ENCODE measurements at regions of chr21 and their contacts with region 1.

Region 1: DNA sequence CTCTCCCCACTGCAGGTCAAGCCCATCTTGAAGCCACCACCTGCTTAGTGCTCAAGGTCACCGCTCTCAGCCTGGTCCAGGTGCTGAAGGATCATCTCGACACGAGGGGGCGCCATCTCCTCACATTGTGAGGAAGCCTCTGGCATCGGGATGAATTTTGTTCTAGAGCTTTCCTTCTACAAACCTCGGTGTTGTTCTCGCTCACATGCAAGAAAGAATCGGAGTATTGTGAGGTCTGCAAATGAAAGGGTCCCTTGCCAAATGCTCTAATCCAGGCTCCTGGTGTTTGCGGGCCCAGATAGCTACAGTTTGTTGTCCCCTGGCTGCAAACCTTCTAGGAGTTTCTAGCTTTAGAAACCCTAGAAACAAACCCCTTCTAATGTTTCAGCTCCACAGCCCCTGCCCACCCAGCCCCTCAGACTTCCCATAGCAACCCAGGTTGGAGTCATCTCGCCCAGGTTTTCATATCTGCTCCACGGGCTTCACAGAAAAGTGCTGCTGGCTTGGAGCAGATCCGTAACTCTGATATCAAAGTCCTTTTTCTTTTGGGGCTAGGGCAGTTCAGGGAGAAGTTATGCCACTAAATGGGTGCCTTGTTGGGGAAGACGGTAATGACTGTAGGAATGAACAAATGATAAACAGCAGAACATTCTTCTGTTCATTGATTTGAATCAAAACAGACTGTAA is 8.6 kb upstream of the ATP5PO start:
- DNase-seq: no peak
- H3K4me3 ChIP-seq: no peak overlapping the region
- H3K27me3 ChIP-seq: no peaks in the 10 kb centered on the region
- CTCF ChIP-seq: peak; percentile 86

Region 2: DNA sequence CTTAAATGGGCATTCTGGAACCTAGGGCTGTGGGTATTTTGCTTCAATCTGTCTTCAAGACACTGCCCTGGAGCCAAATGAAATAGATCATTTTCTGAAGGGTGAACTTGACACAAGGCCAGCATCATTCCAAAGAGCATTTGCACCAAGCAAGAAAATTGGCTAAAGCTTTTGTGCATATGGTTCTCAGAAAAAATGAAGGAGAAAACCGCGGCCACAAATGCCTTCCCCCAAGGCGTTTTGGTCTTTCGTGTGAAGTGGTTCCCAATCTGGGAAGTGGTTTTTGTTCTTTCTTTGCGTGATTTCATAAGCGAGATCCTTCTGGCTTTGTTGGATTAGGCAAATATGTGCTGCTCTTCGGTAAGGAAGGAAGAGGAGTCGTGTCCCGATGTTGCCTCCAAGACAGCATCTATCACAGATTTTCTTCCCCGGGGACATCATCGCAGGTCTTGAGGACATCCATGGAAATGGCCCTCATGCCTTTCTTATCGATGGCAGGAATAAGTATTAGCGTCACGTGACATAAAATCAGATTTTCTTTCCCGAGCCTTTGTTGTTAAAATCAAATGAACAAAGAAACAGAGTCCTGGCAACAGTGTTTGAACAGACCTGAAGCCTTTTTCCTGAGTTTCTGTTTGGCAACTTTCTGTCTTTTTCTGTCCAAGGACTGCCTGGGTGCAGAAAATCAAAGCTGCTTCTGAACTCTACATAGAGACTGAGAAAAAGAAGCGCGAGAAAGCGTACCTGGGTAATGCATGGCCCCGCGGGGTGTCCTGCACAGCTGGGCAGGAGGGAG is 39.6 kb before region 1 on chr21:
- CTCF ChIA-PET with region 1: no interaction called
- POLR2A ChIA-PET with region 1: no interaction called
- DNase-seq: peak; percentile 70
- H3K4me3 ChIP-seq: no peak overlapping the region
- H3K27me3 ChIP-seq: peaks cover 4% of the 10 kb centered on the region; the same call in 1 of the 2 replicates
- CTCF ChIP-seq: no peak

Region 3: GRCh38 chr21:33940164-33940880 is 16.1 kb after region 1 on chr21:
- CTCF ChIA-PET with region 1: interaction called, 21 read pairs
- POLR2A ChIA-PET with region 1: no interaction called
- DNase-seq: no peak
- H3K4me3 ChIP-seq: no peak overlapping the region
- H3K27me3 ChIP-seq: no peaks in the 10 kb centered on the region
- CTCF ChIP-seq: no peak

Region 4: GRCh38 chr21:34073032-34073869 is 149.0 kb after region 1 on chr21 and contains the starts of genes MRPS6 and SLC5A3:
- CTCF ChIA-PET with region 1: interaction called, 24 read pairs
- POLR2A ChIA-PET with region 1: no interaction called
- DNase-seq: no peak
- H3K4me3 ChIP-seq: peak within 1 kb of the TSS; percentile 88
- H3K27me3 ChIP-seq: no peaks in the 10 kb centered on the region
- CTCF ChIP-seq: no peak
- polyA plus RNA-seq, gene MRPS6: 13.8 and 17.1 TPM in 2 replicates
- polyA plus RNA-seq, gene SLC5A3: 1.9 and 4.5 TPM in 2 replicates

Region 5: DNA sequence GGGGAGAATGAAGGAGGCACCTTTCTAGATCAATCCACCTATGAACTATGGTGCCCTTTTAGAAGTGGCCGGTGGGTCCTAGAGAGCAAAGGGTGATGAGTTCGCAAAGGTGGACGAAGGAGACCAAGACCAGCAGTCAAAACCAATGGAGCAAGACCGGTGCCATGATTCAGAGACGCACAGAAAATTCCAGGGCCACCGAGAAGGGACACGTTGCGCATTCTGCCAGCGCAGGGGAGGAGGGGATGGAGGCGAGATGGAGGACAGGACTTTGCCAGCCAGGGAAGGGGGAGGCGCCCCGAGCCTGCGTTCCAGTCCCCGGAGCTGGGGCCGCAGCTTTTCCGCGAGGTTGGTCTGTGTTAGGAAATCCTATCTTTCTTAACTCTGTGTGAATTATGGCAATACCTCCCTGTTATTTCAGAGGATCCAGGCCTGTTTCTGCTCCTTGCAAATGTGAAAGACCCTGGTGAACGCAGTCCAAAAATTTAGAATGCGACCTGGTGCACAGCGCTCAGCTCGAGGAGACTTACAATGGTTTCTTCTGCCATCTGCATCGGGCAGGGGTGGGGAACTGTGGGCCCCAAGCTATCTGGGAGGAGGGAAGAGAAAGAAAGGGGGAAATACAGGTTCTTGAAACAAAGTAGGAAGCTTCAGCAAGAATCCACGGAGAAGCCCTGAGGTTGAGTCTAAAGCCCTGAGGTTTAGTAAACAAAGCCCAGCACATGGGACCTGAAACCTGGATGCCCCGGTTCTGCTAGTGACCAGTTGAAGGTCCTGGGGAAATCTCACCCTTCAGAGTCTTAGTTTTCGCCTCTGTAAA is 278.5 kb after region 1 on chr21:
- CTCF ChIA-PET with region 1: interaction called, 33 read pairs
- POLR2A ChIA-PET with region 1: interaction called, 4 read pairs
- DNase-seq: no peak
- H3K4me3 ChIP-seq: no peak overlapping the region
- H3K27me3 ChIP-seq: no peaks in the 10 kb centered on the region
- CTCF ChIP-seq: no peak

Region 6: DNA sequence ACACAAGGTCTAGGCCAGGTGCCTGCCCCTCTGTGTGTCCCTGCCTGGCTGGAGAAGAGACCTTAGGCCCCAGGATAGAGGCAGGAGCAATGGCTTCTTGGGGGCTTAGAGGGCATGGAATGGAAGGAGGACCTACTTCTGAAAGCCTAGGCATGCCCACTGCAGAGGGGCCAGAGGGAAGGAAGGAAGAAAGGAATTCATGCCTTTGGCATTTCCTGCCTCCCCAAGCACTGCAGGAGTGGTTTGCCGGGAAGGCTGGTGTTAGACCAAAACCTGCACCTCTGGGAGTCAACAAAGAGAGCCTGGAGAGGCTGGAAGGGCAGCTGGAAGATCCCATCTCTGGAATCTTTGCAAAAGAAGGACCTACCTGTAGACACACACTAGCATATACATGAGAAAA is 388.9 kb after region 1 on chr21:
- CTCF ChIA-PET with region 1: interaction called, 15 read pairs
- POLR2A ChIA-PET with region 1: no interaction called
- DNase-seq: no peak
- H3K4me3 ChIP-seq: no peak overlapping the region
- H3K27me3 ChIP-seq: peaks cover 2% of the 10 kb centered on the region; the same call in 1 of the 2 replicates
- CTCF ChIP-seq: no peak

Region 7: GRCh38 chr21:34351786-34352241 is 427.6 kb after region 1 on chr21:
- CTCF ChIA-PET with region 1: interaction called, 278 read pairs
- POLR2A ChIA-PET with region 1: no interaction called
- DNase-seq: no peak
- H3K4me3 ChIP-seq: no peak overlapping the region
- H3K27me3 ChIP-seq: peaks cover 12% of the 10 kb centered on the region
- CTCF ChIP-seq: peak; percentile 64

Region 8: DNA sequence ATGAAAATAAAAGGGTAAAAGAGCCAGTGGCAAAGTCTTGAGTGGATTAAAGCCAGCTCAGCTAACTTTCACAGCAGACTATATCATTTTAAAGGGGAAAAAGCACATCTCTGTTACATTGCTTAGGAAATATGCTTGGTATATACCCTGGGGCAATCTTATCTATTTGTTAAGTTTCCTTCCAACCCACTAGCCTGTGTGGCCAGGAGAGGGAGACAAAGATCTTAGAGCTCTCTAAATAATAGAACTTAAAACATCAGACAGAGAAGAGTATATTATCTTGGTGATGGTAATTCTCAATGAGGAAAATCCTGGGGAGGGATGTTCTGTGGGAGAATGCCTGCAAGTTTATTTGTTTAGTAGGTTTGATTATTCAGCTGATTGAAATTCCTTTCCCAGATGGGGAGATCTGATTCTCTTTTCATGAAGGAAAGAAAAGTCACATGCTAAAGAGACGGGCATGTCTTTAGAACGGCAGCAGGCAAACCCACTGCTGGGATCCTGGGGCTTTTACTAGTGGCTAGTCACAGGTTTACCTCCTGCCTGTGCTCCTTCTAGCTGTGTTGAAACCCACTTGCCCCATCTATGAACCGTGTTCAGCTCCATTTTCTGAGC is 443.2 kb after region 1 on chr21:
- CTCF ChIA-PET with region 1: interaction called, 21 read pairs
- POLR2A ChIA-PET with region 1: no interaction called
- DNase-seq: peak; percentile 81
- H3K4me3 ChIP-seq: no peak overlapping the region
- H3K27me3 ChIP-seq: no peaks in the 10 kb centered on the region; the same call in 1 of the 2 replicates
- CTCF ChIP-seq: peak; percentile 86

Measured in BJ (cell line).